Naive thymus-derived CD4-positive, alpha-beta T cell (primary cell): ENCODE measurements at regions of chr2 and their contacts with region 1.

Region 1: DNA sequence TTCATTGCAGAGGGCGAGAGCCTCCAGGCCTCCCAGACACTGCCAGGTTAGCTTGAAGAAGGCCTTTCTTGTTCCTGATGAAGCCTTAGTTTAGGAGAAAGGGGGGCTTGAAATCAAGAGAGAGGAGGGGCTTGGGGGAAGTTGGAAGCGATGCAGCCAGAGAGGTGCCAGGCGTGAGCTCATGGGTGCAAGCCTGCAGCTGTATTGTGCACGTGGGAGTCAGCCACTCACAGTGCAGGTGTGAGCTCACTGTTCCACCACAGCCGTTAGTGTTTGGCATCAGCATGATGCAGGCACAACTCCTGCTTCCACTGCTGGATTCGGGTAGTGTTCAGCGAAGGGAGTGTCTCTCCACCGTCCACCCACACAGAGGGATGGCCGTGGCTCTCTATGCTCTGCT is 68.4 kb upstream of the ALPP start:
- DNase-seq: peak in 1 of 9 donors; percentile 16
- ATAC-seq: peak; percentile 78
- H3K4me3 ChIP-seq: peak overlapping the region; percentile 33
- H3K4me3 Mint-ChIP-seq: peak overlapping the region; percentile 63 to 71 (median 66)
- H3K27ac ChIP-seq: peak overlapping the region; percentile 47
- H3K27ac Mint-ChIP-seq: peak overlapping the region; percentile 77 to 94 (median 90)
- H3K4me1 ChIP-seq: peaks cover 44 to 55% of the 10 kb centered on the region in 2 donors
- H3K4me1 Mint-ChIP-seq: peaks cover 44 to 84% (median 80%) of the 10 kb centered on the region in 7 donors
- H3K27me3 ChIP-seq: no peaks in the 10 kb centered on the region
- H3K27me3 Mint-ChIP-seq: no peaks in the 10 kb centered on the region

Region 2: GRCh38 chr2:232265329-232265728 is 44.8 kb before region 1 on chr2:
- CTCF ChIA-PET with region 1: no interaction called
- POLR2A ChIA-PET with region 1: no interaction called
- intact Hi-C with region 1: loop called in 1 of 2 experiments (anchors 5 kb)
- DNase-seq: no peak
- ATAC-seq: no peak
- H3K4me3 ChIP-seq: no peak overlapping the region
- H3K4me3 Mint-ChIP-seq: no peak overlapping the region
- H3K27ac ChIP-seq: no peak overlapping the region
- H3K27ac Mint-ChIP-seq: no peak overlapping the region
- H3K4me1 ChIP-seq: no peaks in the 10 kb centered on the region
- H3K4me1 Mint-ChIP-seq: peaks cover 0 to 3% (median 0%) of the 10 kb centered on the region in 7 donors
- H3K27me3 ChIP-seq: no peaks in the 10 kb centered on the region
- H3K27me3 Mint-ChIP-seq: no peaks in the 10 kb centered on the region

Region 3: DNA sequence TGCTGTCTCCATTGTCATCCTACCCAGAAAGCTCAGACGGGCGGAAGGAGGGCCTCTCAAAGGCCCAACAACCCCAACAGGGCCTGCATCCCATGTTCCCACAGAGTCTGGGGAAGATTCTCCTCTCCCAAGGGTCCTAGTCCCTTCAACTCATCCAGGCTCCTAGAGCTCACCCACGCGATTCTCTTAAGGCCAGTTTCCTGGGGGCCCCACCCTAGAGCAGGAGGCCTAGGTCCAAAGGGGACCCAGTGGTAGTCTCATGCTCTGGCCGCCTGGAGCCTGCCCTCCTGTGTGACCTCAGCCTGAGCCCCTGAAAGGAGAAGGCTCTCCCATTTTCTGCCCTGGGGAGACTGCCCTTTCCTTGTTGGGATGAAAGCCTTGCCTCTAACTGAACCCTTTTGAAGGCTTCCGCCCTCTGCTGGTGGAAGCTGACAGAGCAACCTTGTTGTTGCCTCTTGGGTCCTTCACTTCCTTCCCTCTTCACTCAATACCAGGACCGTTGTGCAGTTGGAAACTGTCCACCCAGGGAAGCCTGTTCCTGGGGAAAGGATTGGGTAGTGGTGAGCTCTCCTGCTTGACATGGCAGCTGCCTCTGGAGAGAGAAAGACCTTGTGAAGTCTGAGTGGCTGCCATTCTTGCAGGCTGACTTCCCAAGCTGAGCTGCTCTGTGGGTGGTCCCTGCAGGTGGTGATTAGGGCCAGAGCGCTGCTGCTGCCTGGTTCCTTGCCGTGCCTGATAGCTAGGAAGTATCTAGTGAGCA is 17.5 kb before region 1 on chr2:
- CTCF ChIA-PET with region 1: interaction called, 11 read pairs
- POLR2A ChIA-PET with region 1: interaction called, 3 read pairs
- intact Hi-C with region 1: no loop called
- DNase-seq: peak in 3 of 9 donors; percentile 28 to 50 (median 31)
- ATAC-seq: peak; percentile 71
- H3K4me3 ChIP-seq: no peak overlapping the region
- H3K4me3 Mint-ChIP-seq: no peak overlapping the region
- H3K27ac ChIP-seq: no peak overlapping the region
- H3K27ac Mint-ChIP-seq: peak overlapping the region in 4 of 9 donors; percentile 7 to 35 (median 8)
- H3K4me1 ChIP-seq: peaks cover 0 to 3% of the 10 kb centered on the region in 2 donors
- H3K4me1 Mint-ChIP-seq: peaks cover 6 to 27% (median 20%) of the 10 kb centered on the region in 7 donors
- H3K27me3 ChIP-seq: no peaks in the 10 kb centered on the region
- H3K27me3 Mint-ChIP-seq: no peaks in the 10 kb centered on the region

Region 4: DNA sequence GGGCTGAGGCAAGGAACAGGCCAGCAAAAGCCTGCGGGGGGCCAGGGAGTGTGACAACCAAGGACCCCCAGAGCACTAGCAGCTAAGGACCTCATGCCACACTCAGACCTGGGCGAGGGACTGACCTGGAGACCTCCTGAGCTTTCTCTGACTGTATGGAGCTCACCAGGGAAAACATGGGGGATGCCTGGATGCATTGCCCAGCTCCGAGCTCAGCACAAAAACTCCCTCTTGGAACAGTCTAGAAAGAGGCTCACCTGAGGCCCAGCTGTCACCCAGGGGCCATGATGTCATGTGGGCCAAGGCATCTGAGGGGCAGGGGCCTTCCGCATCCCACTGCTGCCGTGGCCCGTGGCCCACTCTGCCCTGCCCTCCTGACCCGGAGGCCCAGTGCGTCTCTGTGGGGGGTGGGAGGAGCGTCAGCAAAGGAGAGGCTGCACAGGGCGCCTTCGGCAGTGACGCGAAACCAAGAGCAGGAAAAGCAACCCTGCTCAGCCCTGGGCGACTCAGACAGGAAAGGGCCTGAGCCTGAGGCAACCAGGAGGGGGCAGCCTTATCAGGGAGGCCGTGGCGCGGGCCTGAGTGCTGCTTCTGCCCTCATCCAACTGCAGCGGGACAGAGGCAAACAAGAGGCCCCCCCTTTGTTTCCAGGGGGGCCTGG is 11.2 kb after region 1 on chr2:
- CTCF ChIA-PET with region 1: interaction called, 10 read pairs
- POLR2A ChIA-PET with region 1: interaction called, 12 read pairs
- intact Hi-C with region 1: loop called in 1 of 2 experiments (anchors 1 kb)
- DNase-seq: peak in 6 of 9 donors; percentile 39 to 60 (median 49)
- ATAC-seq: peak; percentile 52
- H3K4me3 ChIP-seq: no peak overlapping the region
- H3K4me3 Mint-ChIP-seq: peak overlapping the region in 9 of 10 donors; percentile 23 to 78 (median 41)
- H3K27ac ChIP-seq: peak overlapping the region; percentile 69
- H3K27ac Mint-ChIP-seq: peak overlapping the region; percentile 84 to 96 (median 91)
- H3K4me1 ChIP-seq: peaks cover 38 to 67% of the 10 kb centered on the region in 2 donors
- H3K4me1 Mint-ChIP-seq: peaks cover 45 to 75% (median 65%) of the 10 kb centered on the region in 7 donors
- H3K27me3 ChIP-seq: no peaks in the 10 kb centered on the region
- H3K27me3 Mint-ChIP-seq: no peaks in the 10 kb centered on the region

Region 5: DNA sequence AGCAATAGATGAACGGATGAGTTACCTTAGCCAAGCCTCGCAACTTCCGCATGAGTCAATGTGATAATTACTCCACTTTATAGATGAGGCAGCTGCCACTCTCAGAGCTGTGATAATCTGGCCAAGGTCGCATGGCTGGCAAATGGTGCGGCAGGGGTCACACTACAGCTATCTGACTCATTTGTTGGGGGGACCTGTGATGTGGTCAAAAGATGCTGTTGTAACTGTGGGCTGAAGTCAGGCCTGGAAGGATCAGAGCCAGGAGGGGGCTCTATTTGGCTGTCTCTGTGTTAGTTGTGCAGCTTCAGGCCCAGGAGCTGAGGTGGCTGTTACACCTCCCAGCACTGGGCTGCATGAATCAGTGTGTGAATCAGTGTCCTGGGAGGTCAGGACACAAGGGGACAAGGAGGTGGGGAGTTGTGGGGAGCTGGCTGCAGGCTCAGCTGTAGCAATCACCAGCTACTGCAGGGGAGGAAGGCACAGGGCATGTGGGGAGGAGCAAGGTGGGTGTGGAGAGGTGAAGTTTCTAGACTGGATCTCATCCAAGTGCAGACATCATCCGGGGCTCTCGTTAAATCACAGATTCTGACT is 669.8 kb after region 1 on chr2:
- CTCF ChIA-PET with region 1: no interaction called
- POLR2A ChIA-PET with region 1: no interaction called
- intact Hi-C with region 1: no loop called
- DNase-seq: no peak
- ATAC-seq: no peak
- H3K4me3 ChIP-seq: no peak overlapping the region
- H3K4me3 Mint-ChIP-seq: no peak overlapping the region
- H3K27ac ChIP-seq: no peak overlapping the region
- H3K27ac Mint-ChIP-seq: no peak overlapping the region
- H3K4me1 ChIP-seq: no peaks in the 10 kb centered on the region
- H3K4me1 Mint-ChIP-seq: peaks cover 0 to 8% (median 3%) of the 10 kb centered on the region in 7 donors
- H3K27me3 ChIP-seq: no peaks in the 10 kb centered on the region
- H3K27me3 Mint-ChIP-seq: peaks cover 4 to 31% (median 8%) of the 10 kb centered on the region in 5 donors